IMR-90 (cell line): ENCODE measurements at regions of chr7 and their contacts with region 1.

Region 1: GRCh38 chr7:112985377-112985987 is 101.1 kb downstream of the GPR85 start:
- DNase-seq: peak; percentile 84
- ATAC-seq: peak; percentile 75
- H3K4me3 ChIP-seq: peak overlapping the region; percentile 9; the same call in 1 of the 2 replicates
- H3K27ac ChIP-seq: peak overlapping the region; percentile 98
- H3K4me1 ChIP-seq: peaks cover 6% of the 10 kb centered on the region; the same call in 1 of the 2 replicates
- H3K27me3 ChIP-seq: no peaks in the 10 kb centered on the region
- CTCF ChIP-seq: no peak
- POLR2A ChIP-seq: no peak
- RAD21 ChIP-seq: no peak

Region 2: DNA sequence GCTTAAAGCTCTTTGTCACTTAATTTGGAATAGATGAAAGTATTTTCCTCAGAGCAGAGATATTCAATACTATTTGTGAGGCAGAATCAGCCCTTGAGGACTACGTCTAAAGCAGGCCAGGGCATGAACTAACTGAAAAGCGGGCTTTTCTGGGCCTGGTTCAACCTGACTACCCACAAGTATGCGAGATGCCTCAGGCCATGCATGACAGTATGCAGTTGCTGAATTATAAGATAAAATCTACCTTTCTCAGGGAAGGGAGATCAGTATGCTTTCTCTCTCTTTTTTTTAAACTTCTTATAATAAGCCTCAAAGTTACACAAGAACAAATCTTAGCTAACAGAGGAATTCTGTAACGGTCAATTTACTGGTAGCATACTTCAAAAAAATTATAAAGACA is 215.4 kb before region 1 on chr7:
- CTCF ChIA-PET with region 1: no interaction called
- POLR2A ChIA-PET with region 1: no interaction called
- dilution Hi-C with region 1: no loop called
- in situ Hi-C with region 1: no loop called
- intact Hi-C with region 1: loop called (anchors 10 kb)
- DNase-seq: no peak
- ATAC-seq: no peak
- H3K4me3 ChIP-seq: no peak overlapping the region
- H3K27ac ChIP-seq: no peak overlapping the region
- H3K4me1 ChIP-seq: no peaks in the 10 kb centered on the region
- H3K27me3 ChIP-seq: no peaks in the 10 kb centered on the region
- CTCF ChIP-seq: no peak
- POLR2A ChIP-seq: no peak
- RAD21 ChIP-seq: no peak

Region 3: DNA sequence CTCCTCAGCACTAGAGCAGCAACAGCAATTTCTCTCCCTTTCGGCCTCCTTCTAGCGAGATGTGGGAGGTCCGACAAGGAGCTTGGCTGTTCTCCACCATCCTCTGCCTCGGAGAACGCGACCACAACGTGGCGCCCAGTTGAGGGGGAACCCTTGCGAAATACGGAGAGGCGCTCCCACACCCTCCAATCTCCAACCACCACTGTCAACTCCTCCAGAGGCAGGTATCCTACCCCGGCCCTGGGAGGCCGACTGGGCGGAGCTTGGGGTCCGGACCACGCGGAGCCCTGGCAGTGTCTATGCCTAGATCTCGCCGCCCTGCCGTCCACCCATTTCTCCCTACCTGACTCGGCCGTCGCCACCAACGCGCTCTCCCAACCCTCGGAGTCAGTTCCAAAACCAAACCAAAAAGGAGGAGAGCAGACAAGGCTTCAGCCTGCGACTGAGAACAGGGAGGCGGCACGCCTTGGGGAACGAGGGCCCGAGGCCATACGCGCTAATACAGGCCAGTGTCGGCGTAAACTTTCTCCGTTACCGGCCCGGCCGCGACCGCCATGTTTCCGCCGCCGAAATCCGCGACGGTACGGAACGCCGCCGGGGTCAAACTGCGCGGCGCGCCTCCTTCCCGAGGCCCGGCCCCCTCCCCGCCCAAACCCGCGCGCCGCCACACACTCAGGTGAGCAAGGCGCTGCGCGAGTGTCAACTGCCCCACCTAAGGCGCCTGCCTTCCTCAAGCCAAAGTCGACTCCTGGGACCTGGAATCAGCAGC is 195.5 kb before region 1 on chr7 and contains the start of gene TMEM168:
- CTCF ChIA-PET with region 1: no interaction called
- POLR2A ChIA-PET with region 1: no interaction called
- dilution Hi-C with region 1: no loop called
- in situ Hi-C with region 1: no loop called
- intact Hi-C with region 1: loop called (anchors 5 kb)
- DNase-seq: peak; percentile 76
- ATAC-seq: peak; percentile 92
- H3K4me3 ChIP-seq: peak within 1 kb of the TSS; percentile 89
- H3K27ac ChIP-seq: peak within 1 kb of the TSS; percentile 95
- H3K4me1 ChIP-seq: no peaks in the 10 kb centered on the region
- H3K27me3 ChIP-seq: no peaks in the 10 kb centered on the region
- CTCF ChIP-seq: no peak
- POLR2A ChIP-seq: peak; percentile 72
- RAD21 ChIP-seq: no peak
- total RNA-seq, gene TMEM168: 22.9 and 26.1 TPM in 2 replicates

Region 4: GRCh38 chr7:112939574-112940314 is 45.7 kb before region 1 on chr7:
- CTCF ChIA-PET with region 1: no interaction called
- POLR2A ChIA-PET with region 1: no interaction called
- dilution Hi-C with region 1: no loop called
- in situ Hi-C with region 1: no loop called
- intact Hi-C with region 1: loop called (anchors 5 kb)
- DNase-seq: peak; percentile 99
- ATAC-seq: peak; percentile 97
- H3K4me3 ChIP-seq: peak overlapping the region; percentile 70
- H3K27ac ChIP-seq: peak overlapping the region; percentile 88
- H3K4me1 ChIP-seq: peaks cover 3% of the 10 kb centered on the region; the same call in 1 of the 2 replicates
- H3K27me3 ChIP-seq: no peaks in the 10 kb centered on the region
- CTCF ChIP-seq: no peak
- POLR2A ChIP-seq: no peak
- RAD21 ChIP-seq: no peak